ENCODE measurements at regions of chr3 and their contacts with region 1.

Region 1: GRCh38 chr3:132563420-132564069 is 33.5 kb upstream of the ACKR4 start:
- DNase-seq: no peak
- ATAC-seq: no peak
- H3K4me3 ChIP-seq: no peak overlapping the region
- H3K27ac ChIP-seq: peak overlapping the region in 1 of 2 donors; percentile 28
- H3K4me1 ChIP-seq: peaks cover 0 to 4% of the 10 kb centered on the region in 2 donors
- H3K27me3 ChIP-seq: no peaks in the 10 kb centered on the region

Region 2: DNA sequence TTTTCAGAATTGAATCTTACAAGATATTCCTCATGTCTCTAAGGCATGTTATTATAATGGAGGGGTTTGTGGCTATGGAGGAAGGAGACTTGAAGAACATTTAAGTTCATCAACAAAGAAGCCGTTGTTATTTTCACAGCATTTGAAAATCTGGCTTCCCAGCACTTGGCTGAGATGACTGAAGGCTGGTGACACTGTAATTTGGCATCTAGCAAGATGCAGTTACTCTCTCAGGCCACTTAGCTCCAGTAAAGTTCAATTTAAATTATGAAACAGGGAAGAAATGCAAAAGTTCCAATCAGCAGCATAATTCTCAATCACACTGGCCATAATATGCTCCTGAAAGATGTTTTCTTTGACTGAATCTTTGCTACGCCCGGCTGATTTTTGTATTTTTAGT is 1321.3 kb before region 1 on chr3:
- intact Hi-C with region 1: no loop called
- DNase-seq: no peak
- ATAC-seq: no peak
- H3K4me3 ChIP-seq: no peak overlapping the region
- H3K27ac ChIP-seq: no peak overlapping the region
- H3K4me1 ChIP-seq: no peaks in the 10 kb centered on the region
- H3K27me3 ChIP-seq: peaks cover 0 to 3% of the 10 kb centered on the region in 2 donors

Region 3: GRCh38 chr3:132595014-132595413 is 31.5 kb after region 1 on chr3:
- intact Hi-C with region 1: loop called in 1 of 2 experiments (anchors 5 kb)
- DNase-seq: no peak
- ATAC-seq: no peak
- H3K4me3 ChIP-seq: no peak overlapping the region
- H3K27ac ChIP-seq: peak overlapping the region in 1 of 2 donors; percentile 33
- H3K4me1 ChIP-seq: peaks cover 0 to 4% of the 10 kb centered on the region in 2 donors
- H3K27me3 ChIP-seq: no peaks in the 10 kb centered on the region